ENCODE measurements at regions of chr2 and their contacts with region 1.

Region 1: DNA sequence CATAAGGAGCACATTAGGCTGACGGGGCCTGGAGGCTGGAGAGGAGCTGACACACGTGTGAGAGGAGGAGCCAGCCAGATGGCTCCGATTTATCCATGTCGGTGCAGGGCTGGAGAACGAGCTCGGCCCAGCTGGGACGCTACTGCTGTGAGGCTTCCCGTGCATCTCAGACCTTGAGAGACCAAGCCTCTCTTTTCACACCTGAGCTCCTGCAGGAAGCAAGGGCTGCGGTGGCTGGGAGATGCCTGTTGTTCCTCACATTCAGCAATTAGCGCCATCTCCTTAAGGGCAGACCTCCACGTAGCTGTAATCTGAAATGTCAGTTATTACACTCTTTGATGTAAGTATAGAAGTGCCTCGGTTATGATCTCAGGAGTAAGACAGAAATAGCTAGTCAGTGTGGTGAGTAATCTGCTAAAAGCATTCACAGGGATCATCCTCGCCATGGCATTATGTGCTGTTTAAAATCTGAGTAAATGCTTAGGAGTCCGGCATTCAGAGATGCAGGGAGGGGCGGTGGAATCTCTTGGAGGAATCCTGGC is 107.9 kb downstream of the PRKCE start:
- DNase-seq: no peak
- H3K4me3 ChIP-seq: no peak overlapping the region
- H3K4me3 Mint-ChIP-seq: no peak overlapping the region
- H3K27ac ChIP-seq: no peak overlapping the region
- H3K27ac Mint-ChIP-seq: no peak overlapping the region
- H3K4me1 ChIP-seq: no peaks in the 10 kb centered on the region
- H3K4me1 Mint-ChIP-seq: peaks cover 0 to 2% (median 0%) of the 10 kb centered on the region in 3 donors
- H3K27me3 ChIP-seq: no peaks in the 10 kb centered on the region
- H3K27me3 Mint-ChIP-seq: no peaks in the 10 kb centered on the region

Region 2: GRCh38 chr2:45128580-45128997 is 630.8 kb before region 1 on chr2:
- CTCF ChIA-PET with region 1: no interaction called
- POLR2A ChIA-PET with region 1: no interaction called
- DNase-seq: no peak
- H3K4me3 ChIP-seq: no peak overlapping the region
- H3K4me3 Mint-ChIP-seq: no peak overlapping the region
- H3K27ac ChIP-seq: no peak overlapping the region
- H3K27ac Mint-ChIP-seq: no peak overlapping the region
- H3K4me1 ChIP-seq: no peaks in the 10 kb centered on the region
- H3K4me1 Mint-ChIP-seq: no peaks in the 10 kb centered on the region
- H3K27me3 ChIP-seq: no peaks in the 10 kb centered on the region
- H3K27me3 Mint-ChIP-seq: peaks cover 5 to 7% of the 10 kb centered on the region in 2 donors

Region 3: DNA sequence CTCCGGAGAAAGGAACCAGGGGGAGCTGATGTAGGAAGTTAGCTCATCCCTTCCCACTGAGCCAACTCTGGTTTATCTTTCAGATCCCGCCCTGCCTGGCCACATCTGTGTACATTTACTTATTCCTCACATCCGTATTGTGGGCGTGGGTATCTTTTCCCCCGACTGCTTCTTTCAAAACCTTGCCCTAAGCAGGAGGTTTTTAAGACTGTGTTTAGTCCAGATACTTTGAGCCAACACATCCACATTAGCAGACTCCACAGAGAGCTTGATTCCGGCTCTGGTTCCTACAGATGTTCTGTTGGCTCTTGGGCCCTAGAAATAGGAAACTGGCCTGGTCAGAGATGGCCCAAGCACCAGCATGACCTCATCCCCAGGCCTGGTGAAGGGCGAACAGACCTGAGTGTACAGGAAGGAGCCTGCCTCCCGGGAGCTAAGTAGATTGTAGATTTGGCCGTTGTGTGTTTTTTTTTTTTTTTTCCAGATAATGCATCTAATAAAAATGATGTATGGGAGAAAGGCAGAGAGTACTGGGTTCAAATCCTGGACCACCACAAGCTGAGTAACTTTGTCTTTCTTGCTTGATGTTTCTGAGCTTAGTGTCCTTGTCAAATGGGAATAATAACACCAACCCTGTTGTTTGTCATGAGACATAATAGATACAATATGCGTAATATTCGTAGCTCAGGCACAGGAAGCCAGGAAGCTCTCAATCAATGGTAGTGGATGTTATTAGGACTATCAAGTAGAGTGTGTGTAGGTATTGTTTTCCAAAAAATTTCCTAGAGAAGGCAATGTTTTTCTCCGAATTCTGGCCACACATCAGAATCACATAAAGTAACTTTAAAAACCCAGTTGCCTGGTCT is 15.6 kb before region 1 on chr2:
- CTCF ChIA-PET with region 1: no interaction called
- POLR2A ChIA-PET with region 1: interaction called, 10 read pairs
- DNase-seq: no peak
- H3K4me3 ChIP-seq: no peak overlapping the region
- H3K4me3 Mint-ChIP-seq: no peak overlapping the region
- H3K27ac ChIP-seq: no peak overlapping the region
- H3K27ac Mint-ChIP-seq: peak overlapping the region in 1 of 8 donors; percentile 16
- H3K4me1 ChIP-seq: no peaks in the 10 kb centered on the region
- H3K4me1 Mint-ChIP-seq: peaks cover 4 to 11% (median 9%) of the 10 kb centered on the region in 3 donors
- H3K27me3 ChIP-seq: no peaks in the 10 kb centered on the region
- H3K27me3 Mint-ChIP-seq: no peaks in the 10 kb centered on the region